ENCODE measurements at regions of chr1 and their contacts with region 1.

Region 1: DNA sequence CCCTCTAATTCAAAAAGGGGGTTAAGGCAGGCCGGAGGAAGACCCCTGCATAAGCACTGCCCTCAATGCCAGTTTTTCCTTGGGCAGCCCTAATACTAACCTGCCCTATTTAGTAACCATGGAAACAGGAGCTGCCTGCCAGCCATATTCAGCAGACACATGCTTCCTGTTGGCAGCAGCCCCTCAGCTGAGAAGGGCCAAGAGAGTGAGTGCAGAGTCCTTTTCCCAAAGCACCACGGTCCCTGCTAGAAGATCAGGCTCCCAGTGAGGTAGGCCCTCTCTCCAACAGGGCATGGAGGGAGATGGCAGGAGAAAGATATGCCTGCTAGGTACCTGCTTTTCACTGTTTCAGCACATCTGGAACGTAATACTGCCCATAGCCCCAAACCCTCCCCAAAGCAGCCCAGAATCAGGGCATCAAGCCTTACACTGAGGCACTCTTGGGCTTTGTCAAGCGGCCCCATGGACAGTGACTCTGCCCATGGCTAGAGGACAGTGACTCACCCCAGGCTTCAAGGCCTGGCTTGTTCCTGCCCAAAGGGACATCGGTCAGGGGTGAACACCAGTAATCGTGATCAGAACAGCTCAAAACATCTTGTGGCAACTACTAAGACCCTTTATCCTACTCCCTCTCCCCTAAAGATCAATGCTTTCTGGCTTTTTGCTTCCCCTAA is 64.5 kb downstream of the BCAR3 start:
- DNase-seq: no peak
- H3K4me3 Mint-ChIP-seq: no peak overlapping the region
- H3K27ac Mint-ChIP-seq: no peak overlapping the region
- H3K4me1 Mint-ChIP-seq: peaks cover 12% of the 10 kb centered on the region
- H3K27me3 Mint-ChIP-seq: no peaks in the 10 kb centered on the region

Region 2: DNA sequence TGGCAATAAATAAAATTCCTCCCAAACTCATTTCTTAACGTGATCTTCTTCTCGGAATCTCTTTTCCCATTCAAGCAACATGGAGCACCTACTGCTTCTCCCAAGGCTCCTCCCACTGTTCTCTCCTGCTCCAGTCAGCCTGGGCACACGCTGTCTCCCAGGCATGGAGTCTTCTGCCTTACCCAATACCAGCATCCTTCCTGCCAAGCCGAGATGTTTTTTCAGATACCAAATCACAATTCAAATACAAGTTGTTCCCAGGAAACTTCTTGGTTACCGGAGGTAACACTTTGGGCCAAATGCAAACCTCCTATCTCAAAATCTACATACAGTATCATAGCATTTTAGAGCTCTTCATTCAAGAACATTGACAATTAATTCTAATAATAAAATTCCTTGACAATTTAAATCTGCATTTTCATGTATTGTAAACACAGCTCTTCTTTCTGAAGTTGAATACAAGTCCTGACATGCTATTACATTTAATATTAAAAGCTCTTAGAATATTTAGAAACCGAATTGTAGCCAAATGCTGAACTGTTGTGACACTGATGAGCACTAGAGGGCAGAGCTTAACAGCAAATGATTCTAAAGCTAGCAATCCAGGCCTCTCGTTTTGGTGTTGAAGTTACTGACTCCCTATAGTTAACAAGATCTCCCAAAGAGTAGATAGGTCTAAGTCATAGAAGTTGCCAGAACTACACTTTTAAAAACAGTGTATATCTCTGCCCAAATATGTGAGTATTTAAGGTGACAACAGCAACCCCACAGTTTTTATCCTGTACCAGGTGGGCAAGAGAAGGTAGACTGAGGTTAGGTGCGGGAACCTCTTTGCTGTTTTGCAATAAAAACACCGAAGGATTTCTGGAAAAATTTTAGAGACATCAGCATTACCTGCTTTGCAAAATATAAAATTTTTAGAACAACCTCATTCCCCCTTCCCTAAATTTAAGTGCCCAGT is 12.2 kb after region 1 on chr1:
- CTCF ChIA-PET with region 1: interaction called, 20 read pairs
- POLR2A ChIA-PET with region 1: no interaction called
- DNase-seq: peak; percentile 63
- H3K4me3 Mint-ChIP-seq: no peak overlapping the region
- H3K27ac Mint-ChIP-seq: no peak overlapping the region
- H3K4me1 Mint-ChIP-seq: no peaks in the 10 kb centered on the region
- H3K27me3 Mint-ChIP-seq: no peaks in the 10 kb centered on the region

Region 3: GRCh38 chr1:93814059-93814794 is 197.1 kb after region 1 on chr1:
- CTCF ChIA-PET with region 1: interaction called, 13 read pairs
- POLR2A ChIA-PET with region 1: no interaction called
- DNase-seq: peak; percentile 72
- H3K4me3 Mint-ChIP-seq: no peak overlapping the region
- H3K27ac Mint-ChIP-seq: no peak overlapping the region
- H3K4me1 Mint-ChIP-seq: peaks cover 22% of the 10 kb centered on the region
- H3K27me3 Mint-ChIP-seq: no peaks in the 10 kb centered on the region

Measured in activated CD4-positive, alpha-beta T cell treated with anti-CD3 and anti-CD28 coated beads, Interleukin-2, amount 10 ng/mL, durations not matched to agents 7 days and 5 days (primary cell).